ENCODE measurements at regions of chr15 and their contacts with region 1.

Region 1: DNA sequence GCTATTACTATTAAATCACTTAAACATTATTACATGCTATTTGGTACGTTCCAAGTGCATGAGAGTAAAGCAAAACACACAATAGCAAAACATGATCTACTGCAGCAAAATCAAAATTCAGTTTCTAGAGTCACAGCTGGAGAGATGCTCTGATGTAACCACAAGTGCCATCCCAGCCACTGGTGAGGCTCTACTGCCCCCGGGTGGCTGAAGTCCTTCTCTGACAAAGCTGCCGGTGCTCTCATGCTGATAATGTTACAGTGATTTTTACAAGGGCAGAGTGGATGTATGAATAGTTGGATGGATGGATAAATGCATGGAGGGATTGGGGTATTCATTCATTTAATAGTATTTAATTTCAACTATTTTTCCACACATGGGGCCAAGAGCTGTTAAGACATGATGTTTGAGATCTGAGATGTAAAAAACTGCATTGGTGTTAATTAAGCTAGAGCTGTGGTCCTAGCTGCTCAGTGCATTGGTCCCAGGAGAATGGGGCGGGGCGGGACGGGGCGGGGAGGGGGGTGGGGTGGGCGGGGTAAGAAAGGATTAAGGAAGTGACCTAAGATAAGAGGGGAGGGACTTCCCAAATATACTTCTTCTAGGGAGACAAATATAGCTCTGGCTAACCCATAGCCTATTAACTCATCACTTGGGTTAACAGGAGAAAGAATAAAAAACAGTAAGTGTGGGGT is 5.3 kb upstream of the SPESP1 start:
- DNase-seq: peak; percentile 83
- H3K4me3 Mint-ChIP-seq: no peak overlapping the region
- H3K27ac Mint-ChIP-seq: no peak overlapping the region
- H3K4me1 Mint-ChIP-seq: peaks cover 10% of the 10 kb centered on the region
- H3K27me3 Mint-ChIP-seq: peaks cover 11% of the 10 kb centered on the region
- CTCF ChIP-seq: peak; percentile 87

Region 2: GRCh38 chr15:68559345-68560310 is 365.4 kb before region 1 on chr15:
- CTCF ChIA-PET with region 1: interaction called, 23 read pairs
- POLR2A ChIA-PET with region 1: no interaction called
- intact Hi-C with region 1: loop called (anchors 2 kb)
- DNase-seq: peak; percentile 67
- H3K4me3 Mint-ChIP-seq: peak overlapping the region; percentile 70
- H3K27ac Mint-ChIP-seq: no peak overlapping the region
- H3K4me1 Mint-ChIP-seq: peaks cover 6% of the 10 kb centered on the region
- H3K27me3 Mint-ChIP-seq: no peaks in the 10 kb centered on the region
- CTCF ChIP-seq: peak; percentile 94

Region 3: GRCh38 chr15:68730471-68730919 is 194.5 kb before region 1 on chr15:
- CTCF ChIA-PET with region 1: interaction called, 10 read pairs
- POLR2A ChIA-PET with region 1: no interaction called
- intact Hi-C with region 1: no loop called
- DNase-seq: peak; percentile 53
- H3K4me3 Mint-ChIP-seq: no peak overlapping the region
- H3K27ac Mint-ChIP-seq: no peak overlapping the region
- H3K4me1 Mint-ChIP-seq: no peaks in the 10 kb centered on the region
- H3K27me3 Mint-ChIP-seq: no peaks in the 10 kb centered on the region
- CTCF ChIP-seq: peak; percentile 61

Region 4: GRCh38 chr15:68909601-68910100 is 15.4 kb before region 1 on chr15:
- CTCF ChIA-PET with region 1: interaction called, 18 read pairs
- POLR2A ChIA-PET with region 1: no interaction called
- intact Hi-C with region 1: no loop called
- DNase-seq: no peak
- H3K4me3 Mint-ChIP-seq: no peak overlapping the region
- H3K27ac Mint-ChIP-seq: no peak overlapping the region
- H3K4me1 Mint-ChIP-seq: no peaks in the 10 kb centered on the region
- H3K27me3 Mint-ChIP-seq: peaks cover 31% of the 10 kb centered on the region
- CTCF ChIP-seq: no peak

Measured in MCF 10A (cell line).